B cell (primary cell): ENCODE measurements at regions of chr1 and their contacts with region 1.

Region 1: GRCh38 chr1:205631727-205632373 is at the start of gene ELK4:
- DNase-seq: peak; percentile 99
- ATAC-seq: peak; percentile 81
- H3K4me3 ChIP-seq: peak within 1 kb of the TSS; percentile 57 to 94 (median 72)
- H3K4me3 Mint-ChIP-seq: peak within 1 kb of the TSS; percentile 94
- H3K27ac ChIP-seq: peak within 1 kb of the TSS; percentile 85 to 93
- H3K27ac Mint-ChIP-seq: peak within 1 kb of the TSS; percentile 96
- H3K4me1 ChIP-seq: peaks cover 33 to 41% of the 10 kb centered on the region in 2 donors
- H3K4me1 Mint-ChIP-seq: peaks cover 44% of the 10 kb centered on the region
- H3K27me3 ChIP-seq: no peaks in the 10 kb centered on the region
- H3K27me3 Mint-ChIP-seq: no peaks in the 10 kb centered on the region
- CTCF ChIP-seq: peak; percentile 80
- total RNA-seq, gene ELK4: 143 and 151 TPM in 2 replicates

Region 2: DNA sequence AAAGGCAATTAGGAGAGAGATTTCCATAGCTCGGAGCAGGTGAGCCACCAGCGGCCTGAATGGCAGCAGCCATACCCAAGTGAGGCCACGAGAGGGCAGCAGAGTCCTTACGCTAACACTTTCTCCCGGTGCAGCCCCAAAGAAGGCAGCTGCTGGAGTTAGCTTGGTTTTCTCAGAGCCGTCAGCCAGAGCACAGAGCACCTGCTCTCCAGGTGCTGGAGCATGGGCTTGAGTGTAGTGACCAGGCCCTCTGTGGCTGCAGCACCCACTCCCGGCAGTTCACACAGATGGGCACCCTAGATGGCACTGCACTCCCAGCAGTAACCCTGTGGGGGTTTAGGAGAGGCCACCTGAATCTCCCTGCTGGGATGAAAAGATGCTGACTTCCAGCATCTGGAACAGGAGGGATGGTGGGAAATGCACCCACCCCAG is 358.3 kb before region 1 on chr1:
- CTCF ChIA-PET with region 1: no interaction called
- POLR2A ChIA-PET with region 1: no interaction called
- intact Hi-C with region 1: no loop called
- DNase-seq: peak; percentile 90
- ATAC-seq: peak; percentile 83
- H3K4me3 ChIP-seq: peak overlapping the region in 3 of 5 experiments; percentile 5 to 27 (median 23)
- H3K4me3 Mint-ChIP-seq: peak overlapping the region; percentile 78
- H3K27ac ChIP-seq: peak overlapping the region in 1 of 2 donors; percentile 37
- H3K27ac Mint-ChIP-seq: peak overlapping the region; percentile 94
- H3K4me1 ChIP-seq: peaks cover 51 to 54% of the 10 kb centered on the region in 2 donors
- H3K4me1 Mint-ChIP-seq: peaks cover 46% of the 10 kb centered on the region
- H3K27me3 ChIP-seq: no peaks in the 10 kb centered on the region
- H3K27me3 Mint-ChIP-seq: no peaks in the 10 kb centered on the region
- CTCF ChIP-seq: peak; percentile 97

Region 3: DNA sequence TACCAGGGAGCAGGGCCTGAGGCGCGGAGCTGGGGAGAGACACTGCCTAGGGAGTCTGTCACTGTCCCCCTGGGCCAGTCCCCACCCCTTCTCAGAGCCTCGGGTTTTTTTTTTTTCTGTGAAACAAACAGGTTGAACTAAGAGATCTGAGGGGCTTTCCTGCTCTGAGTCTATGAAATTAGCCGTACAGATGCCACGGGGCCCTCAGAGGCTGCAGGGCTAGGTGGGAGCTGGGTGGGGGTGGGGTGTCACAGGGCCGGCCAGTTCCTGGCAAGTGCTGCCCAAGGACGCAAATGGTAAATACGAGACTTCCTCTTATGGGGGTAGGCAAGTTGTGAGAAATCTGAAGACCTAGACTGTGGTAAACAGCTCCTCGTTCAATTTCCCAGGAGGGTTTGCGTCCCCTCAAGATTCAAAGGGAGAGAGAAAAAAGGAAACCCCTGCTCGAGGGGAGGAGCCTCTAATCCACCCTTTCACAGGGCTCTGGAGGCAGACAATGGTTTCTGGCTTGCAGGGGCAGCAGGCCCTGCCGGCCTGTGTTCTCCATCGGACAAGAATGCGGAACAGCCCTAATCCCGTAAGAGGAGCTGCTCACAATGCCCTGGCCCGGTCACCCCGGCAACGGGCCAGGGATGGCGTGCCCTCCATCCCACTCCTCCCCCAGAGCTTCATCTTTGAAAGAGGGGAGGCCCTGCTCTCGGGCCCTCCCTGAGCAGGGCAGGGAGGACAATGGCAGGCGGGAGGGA is 318.1 kb before region 1 on chr1:
- CTCF ChIA-PET with region 1: no interaction called
- POLR2A ChIA-PET with region 1: no interaction called
- intact Hi-C with region 1: loop called (anchors 10 kb)
- DNase-seq: peak; percentile 90
- ATAC-seq: peak; percentile 83
- H3K4me3 ChIP-seq: peak overlapping the region; percentile 39 to 74 (median 56)
- H3K4me3 Mint-ChIP-seq: peak overlapping the region; percentile 94
- H3K27ac ChIP-seq: peak overlapping the region; percentile 82 to 98
- H3K27ac Mint-ChIP-seq: peak overlapping the region; percentile 98
- H3K4me1 ChIP-seq: peaks cover 88 to 91% of the 10 kb centered on the region in 2 donors
- H3K4me1 Mint-ChIP-seq: peaks cover 93% of the 10 kb centered on the region
- H3K27me3 ChIP-seq: no peaks in the 10 kb centered on the region
- H3K27me3 Mint-ChIP-seq: no peaks in the 10 kb centered on the region
- CTCF ChIP-seq: no peak

Region 4: GRCh38 chr1:205512059-205513045 is 119.5 kb before region 1 on chr1:
- CTCF ChIA-PET with region 1: no interaction called
- POLR2A ChIA-PET with region 1: no interaction called
- intact Hi-C with region 1: no loop called
- DNase-seq: no peak
- ATAC-seq: no peak
- H3K4me3 ChIP-seq: no peak overlapping the region
- H3K4me3 Mint-ChIP-seq: no peak overlapping the region
- H3K27ac ChIP-seq: no peak overlapping the region
- H3K27ac Mint-ChIP-seq: no peak overlapping the region
- H3K4me1 ChIP-seq: no peaks in the 10 kb centered on the region
- H3K4me1 Mint-ChIP-seq: peaks cover 4% of the 10 kb centered on the region
- H3K27me3 ChIP-seq: no peaks in the 10 kb centered on the region
- H3K27me3 Mint-ChIP-seq: no peaks in the 10 kb centered on the region
- CTCF ChIP-seq: no peak

Region 5: DNA sequence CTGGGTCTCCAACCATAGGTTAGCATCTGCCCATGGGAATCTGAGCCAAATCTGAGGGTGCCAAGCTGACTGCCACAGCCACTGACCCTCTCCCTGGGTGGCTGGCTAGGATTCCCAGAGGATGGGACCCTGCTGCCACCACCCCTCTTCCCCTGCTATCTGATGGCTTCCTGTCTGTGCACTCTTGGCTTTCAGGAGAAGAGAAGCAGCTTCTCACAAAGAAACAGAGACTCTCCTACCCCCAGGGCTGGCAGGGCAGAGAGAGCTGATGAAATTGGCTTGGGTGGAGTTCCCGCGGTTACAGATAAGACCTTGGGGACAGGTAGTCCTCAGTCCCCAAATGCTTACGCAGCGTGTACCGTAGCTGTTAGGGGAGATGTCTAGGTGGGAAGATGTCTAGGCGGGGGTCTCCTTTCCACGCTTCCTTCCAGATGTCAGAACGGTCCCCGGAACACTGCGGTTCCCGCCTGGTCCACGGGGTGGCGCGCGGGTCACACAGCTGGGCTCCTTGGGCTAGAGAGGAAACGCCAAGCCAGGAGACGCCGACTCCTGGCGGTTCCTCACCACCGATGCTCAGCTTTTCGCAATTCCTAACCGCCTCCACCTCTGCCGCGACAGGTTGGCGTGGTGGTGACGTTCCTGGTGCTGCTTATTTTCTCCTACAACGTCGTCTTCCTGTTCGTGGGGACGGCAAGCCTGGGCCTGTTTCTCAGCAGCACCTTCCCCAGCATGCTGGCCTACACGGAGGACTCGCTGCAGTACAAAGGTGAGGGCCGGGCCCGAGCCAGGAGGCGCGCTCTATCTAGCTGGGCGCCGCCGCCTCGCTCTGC is 40.1 kb before region 1 on chr1:
- CTCF ChIA-PET with region 1: interaction called, 287 read pairs
- POLR2A ChIA-PET with region 1: interaction called, 65 read pairs
- intact Hi-C with region 1: loop called (anchors 1 kb)
- DNase-seq: peak; percentile 90
- ATAC-seq: peak; percentile 89
- H3K4me3 ChIP-seq: peak overlapping the region in 4 of 5 experiments; percentile 51 to 69 (median 60)
- H3K4me3 Mint-ChIP-seq: peak overlapping the region; percentile 87
- H3K27ac ChIP-seq: peak overlapping the region; percentile 59 to 72
- H3K27ac Mint-ChIP-seq: peak overlapping the region; percentile 85
- H3K4me1 ChIP-seq: peaks cover 46 to 54% of the 10 kb centered on the region in 2 donors
- H3K4me1 Mint-ChIP-seq: peaks cover 48% of the 10 kb centered on the region
- H3K27me3 ChIP-seq: no peaks in the 10 kb centered on the region
- H3K27me3 Mint-ChIP-seq: no peaks in the 10 kb centered on the region
- CTCF ChIP-seq: peak; percentile 98

Region 6: DNA sequence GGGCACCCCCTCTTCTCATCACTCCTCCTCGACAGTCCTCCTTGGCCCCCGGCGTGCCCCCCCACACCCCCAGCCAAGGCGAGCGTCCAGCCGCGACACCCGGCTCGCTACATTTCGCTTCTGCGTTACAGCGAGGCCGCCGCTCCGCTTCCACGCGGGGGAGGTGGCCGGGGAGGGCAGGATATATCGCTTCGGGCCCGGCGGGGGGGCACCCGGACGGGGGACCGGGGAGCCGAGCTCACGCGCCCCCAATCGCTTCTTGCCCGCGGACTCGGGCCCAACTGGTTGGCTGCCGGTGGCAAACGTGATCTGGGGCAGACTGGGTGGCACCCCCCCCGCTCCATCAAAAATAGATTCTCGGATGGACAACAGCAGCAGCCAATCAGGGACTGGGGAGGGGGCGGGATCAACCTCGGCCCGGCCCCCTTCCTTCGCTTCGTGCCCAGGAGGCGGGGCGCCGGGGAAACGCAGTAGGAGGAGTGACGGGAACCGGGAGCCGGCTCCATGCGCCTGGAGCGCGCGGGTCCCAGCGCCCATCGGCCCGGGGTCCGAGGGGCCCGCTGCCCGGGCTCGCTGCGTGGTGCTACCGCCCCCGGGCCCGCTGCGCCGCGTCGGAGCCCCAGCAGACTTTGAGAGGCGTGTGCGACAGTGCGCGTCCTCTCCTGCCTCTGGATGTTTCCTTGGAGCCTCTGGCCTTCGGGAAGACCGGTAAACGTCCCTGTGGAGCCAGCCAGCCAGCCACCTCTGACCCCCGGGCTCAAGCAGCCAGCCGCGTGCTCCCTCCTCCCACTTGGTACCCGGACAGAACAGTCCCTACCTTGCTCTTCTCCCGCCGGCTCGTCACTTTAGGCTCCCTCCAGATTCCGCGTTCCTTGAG is 181.3 kb after region 1 on chr1 and contains the start of gene SLC41A1:
- CTCF ChIA-PET with region 1: no interaction called
- POLR2A ChIA-PET with region 1: no interaction called
- intact Hi-C with region 1: loop called (anchors 1 kb)
- DNase-seq: peak; percentile 96
- ATAC-seq: peak; percentile 96
- H3K4me3 ChIP-seq: peak within 1 kb of the TSS; percentile 52 to 83 (median 80)
- H3K4me3 Mint-ChIP-seq: peak within 1 kb of the TSS; percentile 96
- H3K27ac ChIP-seq: peak within 1 kb of the TSS; percentile 60 to 77
- H3K27ac Mint-ChIP-seq: peak within 1 kb of the TSS; percentile 92
- H3K4me1 ChIP-seq: peaks cover 33 to 46% of the 10 kb centered on the region in 2 donors
- H3K4me1 Mint-ChIP-seq: peaks cover 51% of the 10 kb centered on the region
- H3K27me3 ChIP-seq: no peaks in the 10 kb centered on the region
- H3K27me3 Mint-ChIP-seq: no peaks in the 10 kb centered on the region
- CTCF ChIP-seq: no peak
- total RNA-seq, gene SLC41A1: 24.2 and 24.7 TPM in 2 replicates